Mammary epithelial cell (primary cell): ENCODE measurements at regions of chr4 and their contacts with region 1.

Region 1: GRCh38 chr4:166165829-166166420 is 292.9 kb downstream of the TLL1 start:
- DNase-seq: peak; percentile 59
- H3K4me3 ChIP-seq: no peak overlapping the region
- H3K27ac ChIP-seq: no peak overlapping the region
- H3K4me1 ChIP-seq: no peaks in the 10 kb centered on the region
- H3K27me3 ChIP-seq: peaks cover 3% of the 10 kb centered on the region
- CTCF ChIP-seq: peak; percentile 74 to 82

Region 2: DNA sequence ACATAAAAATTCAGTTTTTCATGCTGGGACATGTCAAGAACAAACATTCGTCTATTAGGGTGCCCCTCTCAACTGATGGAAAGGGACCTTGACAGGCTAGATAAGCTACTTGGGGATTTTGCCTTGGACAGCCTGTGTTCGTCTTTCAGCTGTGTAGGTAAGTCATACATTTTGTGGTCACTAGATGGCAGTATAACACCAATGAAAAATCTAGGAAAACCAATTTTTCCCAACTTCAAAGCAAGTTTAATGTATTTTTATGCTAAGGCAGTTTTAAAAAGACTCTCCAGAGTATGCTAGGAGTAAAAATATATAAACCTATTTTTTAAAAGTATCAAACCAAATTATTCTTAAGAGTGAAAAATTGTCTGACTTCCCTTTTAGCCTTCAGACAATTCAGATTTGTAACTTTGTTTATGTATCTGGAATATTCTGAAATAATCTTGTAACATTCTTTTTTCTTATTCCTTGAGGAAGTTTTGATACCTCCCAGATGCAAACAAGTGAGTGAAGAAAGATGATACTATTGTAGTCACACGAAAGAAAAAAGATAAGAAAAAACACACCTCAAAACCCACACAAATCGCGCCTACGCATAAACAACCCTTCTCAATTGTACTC is 628.8 kb before region 1 on chr4:
- CTCF ChIA-PET with region 1: no interaction called
- dilution Hi-C with region 1: no loop called
- in situ Hi-C with region 1: no loop called
- intact Hi-C with region 1: loop called (anchors 1 kb)
- DNase-seq: peak; percentile 37
- H3K4me3 ChIP-seq: no peak overlapping the region
- H3K27ac ChIP-seq: no peak overlapping the region
- H3K4me1 ChIP-seq: no peaks in the 10 kb centered on the region
- H3K27me3 ChIP-seq: no peaks in the 10 kb centered on the region
- CTCF ChIP-seq: peak; percentile 41 to 56

Region 3: DNA sequence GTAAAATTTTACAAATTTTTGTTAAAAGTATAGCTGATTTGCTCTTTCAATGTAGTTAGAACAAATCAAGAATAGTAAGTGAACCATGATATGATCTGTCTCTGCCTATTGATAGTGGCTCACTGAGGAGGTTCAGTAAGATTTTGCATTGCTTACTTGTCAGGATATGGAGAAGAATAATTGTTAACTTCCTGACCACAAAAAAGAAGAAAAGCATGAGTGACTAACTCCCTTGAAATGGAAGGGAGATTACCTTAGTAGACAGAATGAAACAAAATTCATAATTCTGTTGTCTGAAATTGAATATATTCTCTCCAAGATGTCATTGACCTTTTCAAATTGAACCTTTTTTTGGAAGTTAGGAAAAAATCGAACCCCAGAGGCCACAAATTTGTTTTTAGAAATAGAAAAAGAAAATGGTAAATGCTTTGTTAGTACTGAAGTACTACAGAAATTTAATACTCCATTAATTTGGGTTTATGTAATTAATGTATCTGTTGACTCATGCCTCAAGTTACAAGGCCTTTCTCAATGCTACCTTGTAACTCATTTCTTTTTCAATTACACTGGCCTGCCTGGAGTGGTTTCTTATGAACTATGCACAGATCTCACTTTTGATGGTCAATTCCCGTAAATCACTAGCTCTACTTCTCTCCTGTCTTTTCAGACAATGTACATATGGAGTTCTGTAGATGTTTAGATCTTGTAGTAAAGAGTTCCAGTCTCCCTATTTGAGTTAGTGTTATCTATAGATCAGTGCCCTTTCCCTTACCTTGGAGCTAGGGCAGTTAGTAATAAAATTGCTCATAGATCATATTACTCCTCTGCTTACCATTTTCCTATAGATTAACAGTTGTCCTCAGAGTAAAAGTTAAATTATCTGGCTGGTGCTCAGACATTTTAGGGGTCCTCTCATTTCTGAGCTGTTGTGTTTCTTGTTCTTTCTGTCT is 153.5 kb before region 1 on chr4:
- CTCF ChIA-PET with region 1: no interaction called
- dilution Hi-C with region 1: no loop called
- in situ Hi-C with region 1: no loop called
- intact Hi-C with region 1: no loop called
- DNase-seq: peak; percentile 73
- H3K4me3 ChIP-seq: no peak overlapping the region
- H3K27ac ChIP-seq: peak overlapping the region; percentile 75
- H3K4me1 ChIP-seq: peaks cover 12% of the 10 kb centered on the region
- H3K27me3 ChIP-seq: no peaks in the 10 kb centered on the region
- CTCF ChIP-seq: no peak

Region 4: DNA sequence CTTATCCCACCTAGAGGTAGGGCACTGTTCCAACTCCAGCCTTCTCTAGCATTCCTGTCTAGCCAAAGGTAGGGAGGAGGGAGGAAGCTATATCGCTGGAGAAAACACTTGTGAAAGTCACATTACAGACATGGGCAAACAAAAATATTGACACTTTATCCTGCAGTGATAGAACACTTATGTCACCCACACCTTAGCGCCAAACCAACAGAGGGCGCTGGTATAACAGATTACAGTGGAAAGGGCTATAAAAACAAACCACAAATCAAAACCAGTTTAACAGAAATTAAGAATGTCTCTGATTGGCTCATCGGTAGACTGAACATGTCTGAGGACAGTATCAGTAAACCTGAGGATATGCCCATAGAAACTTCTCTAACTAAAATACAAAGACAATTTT is 158.4 kb after region 1 on chr4:
- CTCF ChIA-PET with region 1: no interaction called
- dilution Hi-C with region 1: no loop called
- in situ Hi-C with region 1: no loop called
- intact Hi-C with region 1: loop called (anchors 2 kb)
- DNase-seq: peak; percentile 30
- H3K4me3 ChIP-seq: no peak overlapping the region
- H3K27ac ChIP-seq: no peak overlapping the region
- H3K4me1 ChIP-seq: peaks cover 8% of the 10 kb centered on the region
- H3K27me3 ChIP-seq: no peaks in the 10 kb centered on the region
- CTCF ChIP-seq: peak; percentile 53 to 60

Region 5: DNA sequence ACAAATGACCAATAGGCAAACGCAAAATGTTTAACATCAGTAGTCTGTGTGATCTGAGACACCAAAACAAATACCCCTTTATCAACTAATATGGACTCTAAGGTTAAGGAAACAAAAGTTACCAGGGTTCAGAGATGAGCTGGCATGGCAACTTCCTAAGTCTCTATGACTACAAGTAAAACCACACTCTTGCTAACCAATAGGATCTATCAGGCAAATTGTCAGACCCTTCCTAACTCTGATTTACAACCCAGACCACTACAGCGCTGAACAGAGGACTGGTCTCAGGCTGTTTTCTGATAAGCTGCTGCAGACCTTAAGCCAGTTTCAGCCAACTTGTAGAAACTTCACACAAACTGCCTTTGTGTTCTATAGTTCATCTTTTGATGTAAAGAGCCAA is 315.1 kb after region 1 on chr4:
- CTCF ChIA-PET with region 1: no interaction called
- dilution Hi-C with region 1: no loop called
- in situ Hi-C with region 1: no loop called
- intact Hi-C with region 1: no loop called
- DNase-seq: no peak
- H3K4me3 ChIP-seq: no peak overlapping the region
- H3K27ac ChIP-seq: no peak overlapping the region
- H3K4me1 ChIP-seq: no peaks in the 10 kb centered on the region
- H3K27me3 ChIP-seq: no peaks in the 10 kb centered on the region
- CTCF ChIP-seq: no peak

Region 6: DNA sequence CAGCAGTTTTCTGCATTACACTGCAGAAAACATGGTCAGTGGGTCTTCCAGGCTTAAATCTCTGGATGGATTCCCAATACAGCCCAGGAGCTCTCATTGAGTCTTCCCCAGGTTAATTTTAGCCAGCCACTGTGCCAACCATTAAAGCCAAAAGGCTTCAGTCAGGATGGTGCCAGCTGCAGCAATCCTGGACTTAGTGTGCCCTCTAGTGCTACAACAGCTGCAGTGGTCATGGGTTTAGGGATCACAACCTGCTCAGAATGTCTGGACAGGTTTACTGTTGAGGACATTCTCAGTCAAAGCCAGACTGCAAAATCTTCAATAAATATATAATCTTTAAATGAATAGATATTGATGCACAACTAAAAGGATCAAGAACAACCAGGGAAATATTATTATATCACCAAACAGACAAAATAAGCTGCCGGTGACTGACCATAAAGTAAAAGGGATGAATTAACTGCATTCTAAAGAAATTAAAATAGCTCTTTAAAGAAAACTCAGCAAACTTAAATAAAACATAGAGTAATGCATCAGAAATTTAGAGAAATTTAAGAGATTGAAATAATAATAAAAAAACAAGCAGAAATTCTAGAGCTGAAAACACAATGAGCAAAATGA is 428.5 kb after region 1 on chr4:
- CTCF ChIA-PET with region 1: interaction called, 3 read pairs
- dilution Hi-C with region 1: no loop called
- in situ Hi-C with region 1: loop called (anchors 10 kb)
- intact Hi-C with region 1: loop called (anchors 1 kb)
- DNase-seq: peak; percentile 50
- H3K4me3 ChIP-seq: no peak overlapping the region
- H3K27ac ChIP-seq: no peak overlapping the region
- H3K4me1 ChIP-seq: no peaks in the 10 kb centered on the region
- H3K27me3 ChIP-seq: peaks cover 2% of the 10 kb centered on the region
- CTCF ChIP-seq: peak; percentile 92 to 98

Region 7: GRCh38 chr4:167021545-167022155 is 855.7 kb after region 1 on chr4:
- CTCF ChIA-PET with region 1: no interaction called
- dilution Hi-C with region 1: no loop called
- in situ Hi-C with region 1: loop called in 1 of 2 experiments (anchors 25 kb)
- intact Hi-C with region 1: no loop called
- DNase-seq: peak; percentile 52
- H3K4me3 ChIP-seq: no peak overlapping the region
- H3K27ac ChIP-seq: no peak overlapping the region
- H3K4me1 ChIP-seq: no peaks in the 10 kb centered on the region
- H3K27me3 ChIP-seq: no peaks in the 10 kb centered on the region
- CTCF ChIP-seq: peak; percentile 62 to 82